A673 (cell line): ENCODE measurements at regions of chr9 and their contacts with region 1.

Region 1: GRCh38 chr9:96654443-96655197 is 497 bp downstream of the PRXL2C start:
- DNase-seq: peak; percentile 81
- H3K4me3 ChIP-seq: peak overlapping the region; percentile 56
- H3K27ac ChIP-seq: no peak overlapping the region
- H3K4me1 ChIP-seq: no peaks in the 10 kb centered on the region
- H3K27me3 ChIP-seq: no peaks in the 10 kb centered on the region
- CTCF ChIP-seq: no peak

Region 2: GRCh38 chr9:96449845-96450612 is 204.6 kb before region 1 on chr9 and contains the start of gene HABP4:
- CTCF ChIA-PET with region 1: no interaction called
- POLR2A ChIA-PET with region 1: no interaction called
- intact Hi-C with region 1: loop called (anchors 5 kb)
- DNase-seq: peak; percentile 96
- H3K4me3 ChIP-seq: peak within 1 kb of the TSS; percentile 75
- H3K27ac ChIP-seq: peak within 1 kb of the TSS; percentile 51
- H3K4me1 ChIP-seq: peaks cover 12% of the 10 kb centered on the region
- H3K27me3 ChIP-seq: no peaks in the 10 kb centered on the region
- CTCF ChIP-seq: no peak
- total RNA-seq, gene HABP4: 11.3 and 11.6 TPM in 2 replicates